Heart right ventricle (tissue), 16 donors: ENCODE measurements at regions of chr7 and their contacts with region 1.

Region 1: DNA sequence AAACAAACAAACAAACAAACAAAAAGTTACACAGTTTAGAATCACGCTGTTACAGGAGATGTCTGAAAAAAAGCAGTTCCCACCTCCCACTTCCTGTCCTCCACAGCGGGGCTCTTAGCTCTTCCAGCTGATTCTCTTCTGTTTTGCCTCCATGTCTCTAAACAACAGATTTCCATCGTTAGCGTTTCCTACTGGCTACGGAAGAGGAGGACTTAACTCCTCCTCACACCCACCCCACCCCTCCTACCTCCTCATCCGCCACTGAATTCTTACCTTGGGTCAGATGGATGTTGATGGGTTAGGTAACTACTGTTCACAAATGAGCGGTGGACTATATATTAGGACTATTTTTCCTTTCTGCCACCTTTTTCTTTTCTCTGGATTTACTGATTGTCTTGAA is 36.8 kb upstream of the NUB1 start:
- DNase-seq: no peak
- ATAC-seq: no peak
- H3K4me3 ChIP-seq: peak overlapping the region in 2 of 10 donors; percentile 7 to 31
- H3K27ac ChIP-seq: no peak overlapping the region
- H3K4me1 ChIP-seq: peaks cover 3 to 17% (median 11%) of the 10 kb centered on the region in 9 donors
- H3K27me3 ChIP-seq: peaks cover 0 to 61% (median 39%) of the 10 kb centered on the region in 7 donors
- CTCF ChIP-seq: no peak

Region 2: GRCh38 chr7:151172273-151173141 is 132.3 kb before region 1 on chr7:
- intact Hi-C with region 1: loop called in 6 of 10 experiments (anchors 5 to 10 kb)
- DNase-seq: peak; percentile 62 to 82
- ATAC-seq: peak; percentile 59 to 79 (median 71)
- H3K4me3 ChIP-seq: no peak overlapping the region
- H3K27ac ChIP-seq: no peak overlapping the region
- H3K4me1 ChIP-seq: peaks cover 0 to 21% (median 4%) of the 10 kb centered on the region in 9 donors
- H3K27me3 ChIP-seq: peaks cover 4 to 78% (median 47%) of the 10 kb centered on the region in 7 donors
- CTCF ChIP-seq: peak; percentile 100